Activated CD4-positive, alpha-beta T cell treated with anti-CD3 and anti-CD28 coated beads, Interleukin-2, amount 10 ng/mL, durations not matched to agents 24 days and 14 days (primary cell): ENCODE measurements at regions of chr11 and their contacts with region 1.

Region 1: DNA sequence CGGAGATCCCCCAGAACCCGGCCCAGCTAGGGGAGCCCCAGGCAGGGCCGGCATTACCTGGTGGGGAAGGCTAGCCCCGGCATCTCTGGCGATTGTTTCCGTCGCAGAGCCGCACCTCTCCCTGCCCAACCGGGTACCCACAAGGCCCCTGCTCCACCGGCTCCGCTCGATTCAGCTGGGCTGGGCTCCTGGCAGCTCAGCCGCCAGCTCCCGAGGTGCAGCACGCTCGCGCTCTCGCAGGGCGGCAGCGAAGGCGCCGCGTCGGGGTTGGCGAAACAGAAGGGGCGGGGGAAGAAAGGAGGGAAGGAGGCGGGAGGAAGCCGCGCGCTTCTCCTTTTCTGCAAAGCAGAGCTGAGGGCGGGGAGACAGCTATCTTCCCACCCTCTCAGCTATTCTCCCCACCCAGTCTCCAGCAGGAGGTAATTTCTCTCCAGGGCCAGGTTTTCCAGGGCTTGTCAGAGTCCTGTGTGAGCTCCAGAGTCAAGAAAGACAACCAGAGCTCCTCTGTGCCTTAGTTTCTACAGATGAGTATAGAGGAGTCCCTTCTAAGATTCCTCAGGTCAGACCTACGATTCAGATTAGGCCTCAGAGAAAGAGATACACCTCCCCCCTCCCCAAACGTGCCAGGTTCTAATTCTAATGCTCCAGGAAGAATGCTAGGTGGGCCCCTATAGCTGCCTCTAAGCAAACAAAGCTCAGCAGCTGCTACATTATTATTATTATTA is 62.0 kb downstream of the PAK1 start:
- DNase-seq: peak; percentile 95
- H3K4me3 Mint-ChIP-seq: peak overlapping the region; percentile 92
- H3K27ac Mint-ChIP-seq: peak overlapping the region; percentile 88
- H3K4me1 Mint-ChIP-seq: peaks cover 41% of the 10 kb centered on the region
- H3K27me3 Mint-ChIP-seq: no peaks in the 10 kb centered on the region

Region 2: DNA sequence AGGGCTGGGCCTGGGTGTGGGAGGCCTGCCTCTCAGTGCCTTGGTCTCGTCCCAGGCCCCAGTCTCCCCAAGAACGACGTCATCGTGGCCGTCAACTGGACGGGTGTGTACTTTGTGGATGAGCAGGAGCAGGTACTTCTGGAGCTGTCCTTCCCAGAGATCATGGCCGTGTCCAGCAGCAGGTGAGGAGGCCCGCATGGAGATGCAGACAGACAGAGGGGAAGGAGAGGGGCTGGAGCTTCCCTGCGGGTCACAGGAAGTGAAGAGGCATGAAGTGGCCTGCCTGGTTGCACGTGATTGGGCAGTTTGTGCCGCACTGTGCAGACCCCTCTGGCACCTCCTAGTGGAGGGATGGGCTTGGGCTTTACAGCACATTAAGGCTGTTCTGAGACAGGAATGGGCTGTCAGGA is 213.4 kb before region 1 on chr11:
- intact Hi-C with region 1: no loop called
- DNase-seq: peak; percentile 66
- H3K4me3 Mint-ChIP-seq: no peak overlapping the region
- H3K27ac Mint-ChIP-seq: no peak overlapping the region
- H3K4me1 Mint-ChIP-seq: no peaks in the 10 kb centered on the region
- H3K27me3 Mint-ChIP-seq: no peaks in the 10 kb centered on the region

Region 3: DNA sequence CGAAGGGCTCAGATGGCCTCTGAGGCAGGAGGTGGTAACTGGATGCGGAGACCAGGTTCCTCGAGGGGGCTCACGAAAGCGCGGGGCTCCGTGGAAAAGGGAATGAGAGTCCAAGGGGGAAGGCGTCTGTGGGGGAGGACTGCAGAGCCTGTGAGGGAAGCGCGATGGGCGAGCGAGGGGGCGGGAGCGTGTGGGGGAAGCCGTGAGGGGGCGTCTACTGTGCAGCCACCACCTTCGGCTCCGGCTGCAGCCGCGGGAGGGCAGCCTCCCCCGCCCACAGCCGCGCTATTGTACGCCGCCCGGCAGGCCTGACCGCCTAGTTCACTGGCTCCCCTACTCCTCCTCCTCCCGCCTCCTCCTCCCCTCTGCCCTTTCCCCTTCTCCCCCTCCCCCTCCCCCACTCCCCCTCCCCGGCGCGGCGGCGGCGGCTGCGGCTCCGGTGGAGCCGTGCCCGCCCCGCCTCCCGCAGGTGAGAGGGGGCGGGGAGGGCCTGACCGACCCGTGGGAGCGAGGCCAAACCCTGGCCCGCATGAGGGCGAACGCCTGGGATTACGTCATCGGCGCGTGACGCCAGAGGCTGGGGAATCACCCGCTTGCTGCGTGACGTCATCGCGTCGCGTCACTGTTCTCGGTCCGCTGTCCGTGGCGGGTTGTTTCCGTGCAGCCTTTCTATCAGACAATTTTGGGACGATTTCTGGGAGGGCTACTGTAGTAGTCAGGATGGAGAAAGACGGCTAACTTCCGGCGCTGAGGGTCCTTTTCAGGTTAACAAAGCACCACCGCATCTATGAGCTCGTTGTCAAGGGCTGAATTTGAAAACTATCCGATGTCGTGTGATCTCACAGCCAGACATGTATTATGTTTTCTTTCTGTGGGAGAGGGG is 62.2 kb after region 1 on chr11 and contains the start of gene PAK1:
- intact Hi-C with region 1: loop called (anchors 5 kb)
- DNase-seq: peak; percentile 95
- H3K4me3 Mint-ChIP-seq: peak within 1 kb of the TSS; percentile 84
- H3K27ac Mint-ChIP-seq: peak within 1 kb of the TSS; percentile 80
- H3K4me1 Mint-ChIP-seq: peaks cover 19% of the 10 kb centered on the region
- H3K27me3 Mint-ChIP-seq: peaks cover 33% of the 10 kb centered on the region
- total RNA-seq, gene PAK1: 32.1 and 33.1 TPM in 2 replicates